ENCODE measurements at regions of chr10 and their contacts with region 1.

Region 1: DNA sequence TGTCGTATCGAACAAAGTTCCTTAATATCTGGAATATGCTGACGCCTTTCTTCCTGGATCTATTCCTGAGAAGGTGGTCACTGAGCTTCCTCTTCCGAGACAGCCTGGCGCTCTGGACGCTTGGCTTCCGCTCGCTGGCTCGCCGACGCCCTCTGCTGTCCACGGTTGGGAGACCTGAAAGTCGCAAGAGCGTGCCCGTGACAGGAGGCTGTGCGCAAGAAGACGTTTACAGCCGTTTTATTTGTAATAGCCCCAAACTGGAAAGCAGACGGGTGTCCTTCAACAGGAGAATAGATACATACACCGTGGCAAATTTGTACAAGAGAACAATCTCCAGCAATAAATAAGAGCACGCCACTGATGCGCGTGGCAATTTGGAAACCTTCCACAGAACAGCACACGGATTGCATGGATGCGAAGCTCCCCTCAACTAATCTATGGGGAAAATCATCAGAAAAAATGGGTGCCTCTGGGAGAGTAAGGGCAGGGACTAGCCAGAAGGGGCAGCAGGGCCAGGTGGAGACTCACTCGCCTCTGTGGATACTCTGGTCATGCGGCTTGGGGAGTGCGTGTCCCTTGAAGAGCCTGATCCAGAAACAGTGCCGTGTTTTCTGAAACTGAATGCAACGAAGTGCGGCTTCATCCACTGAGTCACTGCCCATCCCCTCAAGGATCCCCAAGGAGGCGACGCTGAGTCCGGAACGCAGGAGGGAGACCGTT is 41.5 kb upstream of the BNIP3 start:
- DNase-seq: peak; percentile 85
- H3K4me3 Mint-ChIP-seq: no peak overlapping the region
- H3K27ac Mint-ChIP-seq: no peak overlapping the region
- H3K4me1 Mint-ChIP-seq: peaks cover 5% of the 10 kb centered on the region
- H3K27me3 Mint-ChIP-seq: peaks cover 20% of the 10 kb centered on the region

Region 2: DNA sequence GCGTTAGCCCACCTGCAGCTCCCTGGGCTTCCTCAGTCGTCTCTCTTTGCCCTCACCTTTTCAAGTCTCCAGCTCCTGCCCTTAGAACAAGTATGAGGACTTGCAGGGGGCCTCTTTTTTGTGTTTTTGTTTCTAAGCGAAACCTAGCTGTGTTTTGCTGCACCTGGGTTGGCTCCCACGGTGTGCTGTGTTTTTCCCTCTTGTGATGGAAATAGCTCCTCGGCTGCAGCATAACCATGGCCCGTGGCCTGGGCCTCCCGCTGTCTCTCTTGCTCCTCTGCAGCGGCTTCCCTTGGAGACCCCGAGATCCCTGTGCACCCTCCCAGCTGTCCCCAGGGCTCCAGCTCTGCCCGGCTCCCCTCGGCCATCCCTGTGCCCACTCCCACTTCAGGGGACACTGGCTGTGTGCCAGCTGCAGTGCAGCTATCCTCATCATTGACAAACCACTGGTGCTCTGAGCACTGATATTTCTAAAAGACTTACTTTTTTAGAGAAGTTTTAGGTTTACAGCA is 636.2 kb before region 1 on chr10:
- CTCF ChIA-PET with region 1: no interaction called
- POLR2A ChIA-PET with region 1: no interaction called
- intact Hi-C with region 1: no loop called
- DNase-seq: no peak
- H3K4me3 Mint-ChIP-seq: no peak overlapping the region
- H3K27ac Mint-ChIP-seq: no peak overlapping the region
- H3K4me1 Mint-ChIP-seq: no peaks in the 10 kb centered on the region
- H3K27me3 Mint-ChIP-seq: no peaks in the 10 kb centered on the region

Region 3: DNA sequence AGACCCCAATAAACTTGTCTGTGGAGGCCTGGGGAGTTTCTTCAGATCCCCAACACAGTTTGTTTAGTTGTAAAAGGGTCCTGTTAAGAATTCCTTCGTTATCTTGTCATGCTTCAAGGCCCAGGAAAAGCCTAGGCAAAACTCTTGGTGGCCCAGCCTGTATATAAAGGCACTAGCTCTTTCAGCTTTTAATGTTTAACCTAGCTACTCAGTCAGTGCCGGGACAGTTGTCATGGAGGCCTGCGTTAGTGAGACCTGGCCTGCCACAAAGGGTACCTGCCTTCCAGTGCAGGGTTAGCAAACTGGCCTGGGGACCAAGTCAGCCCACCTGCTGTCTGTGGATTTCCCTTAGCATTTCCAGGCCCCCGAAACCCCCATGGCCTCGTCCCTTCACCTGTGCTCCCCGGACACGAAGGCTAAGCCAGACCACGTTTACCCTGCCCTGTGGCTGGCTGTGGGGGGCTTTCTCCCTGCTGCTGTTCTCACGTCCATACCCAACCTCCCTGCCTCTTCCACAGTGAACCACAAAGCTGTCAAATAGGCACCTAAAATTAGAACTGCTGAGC is 219.3 kb before region 1 on chr10:
- CTCF ChIA-PET with region 1: no interaction called
- POLR2A ChIA-PET with region 1: no interaction called
- intact Hi-C with region 1: no loop called
- DNase-seq: no peak
- H3K4me3 Mint-ChIP-seq: no peak overlapping the region
- H3K27ac Mint-ChIP-seq: no peak overlapping the region
- H3K4me1 Mint-ChIP-seq: no peaks in the 10 kb centered on the region
- H3K27me3 Mint-ChIP-seq: peaks cover 3% of the 10 kb centered on the region

Region 4: DNA sequence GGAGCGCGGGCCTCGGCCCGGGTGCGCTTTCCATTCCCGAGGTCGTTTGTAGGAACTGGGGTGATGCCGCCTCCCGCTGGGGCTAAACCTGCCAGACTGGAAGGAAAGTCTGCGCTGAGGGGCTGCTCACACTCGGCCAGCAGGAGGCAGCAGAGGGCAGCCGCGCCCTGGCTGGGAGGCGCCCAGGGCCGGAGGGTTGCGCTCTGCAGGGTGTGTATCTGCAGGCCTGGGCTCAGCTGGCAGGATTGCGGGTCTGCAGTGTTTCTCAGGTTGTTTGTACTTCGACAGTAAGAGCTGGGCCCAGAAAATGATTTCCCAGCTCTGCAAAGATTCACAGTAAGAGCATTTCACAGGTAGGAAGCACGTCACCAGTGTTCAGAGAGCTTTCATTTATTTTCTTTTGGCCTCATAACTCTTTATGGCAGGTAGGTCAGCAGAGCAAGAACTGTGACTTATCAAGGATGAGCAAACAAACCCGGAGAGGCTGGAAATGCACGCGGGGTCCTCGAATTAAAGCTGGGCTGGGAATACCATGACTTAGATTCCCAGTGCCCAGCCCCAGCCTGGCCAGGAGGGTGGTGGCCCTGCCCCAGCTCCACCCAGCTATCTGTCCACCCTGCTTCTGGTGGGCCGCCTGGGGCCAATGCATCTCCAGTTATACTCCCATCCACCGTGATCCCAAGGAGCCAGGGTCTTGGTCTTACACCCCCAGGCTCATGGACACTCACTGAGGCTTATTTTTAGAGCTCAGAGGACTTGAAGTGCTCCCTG is 137.7 kb before region 1 on chr10:
- CTCF ChIA-PET with region 1: interaction called, 124 read pairs
- POLR2A ChIA-PET with region 1: interaction called, 4 read pairs
- intact Hi-C with region 1: loop called (anchors 1 kb)
- DNase-seq: peak; percentile 86
- H3K4me3 Mint-ChIP-seq: no peak overlapping the region
- H3K27ac Mint-ChIP-seq: peak overlapping the region; percentile 29
- H3K4me1 Mint-ChIP-seq: peaks cover 3% of the 10 kb centered on the region
- H3K27me3 Mint-ChIP-seq: peaks cover 2% of the 10 kb centered on the region

Region 5: GRCh38 chr10:131972474-131973071 is 50.7 kb before region 1 on chr10:
- CTCF ChIA-PET with region 1: interaction called, 24 read pairs
- POLR2A ChIA-PET with region 1: no interaction called
- intact Hi-C with region 1: no loop called
- DNase-seq: peak; percentile 58
- H3K4me3 Mint-ChIP-seq: peak overlapping the region; percentile 66
- H3K27ac Mint-ChIP-seq: peak overlapping the region; percentile 89
- H3K4me1 Mint-ChIP-seq: peaks cover 60% of the 10 kb centered on the region
- H3K27me3 Mint-ChIP-seq: no peaks in the 10 kb centered on the region

Region 6: GRCh38 chr10:132011024-132011423 is 12.2 kb before region 1 on chr10:
- CTCF ChIA-PET with region 1: interaction called, 18 read pairs
- POLR2A ChIA-PET with region 1: no interaction called
- intact Hi-C with region 1: no loop called
- DNase-seq: no peak
- H3K4me3 Mint-ChIP-seq: no peak overlapping the region
- H3K27ac Mint-ChIP-seq: no peak overlapping the region
- H3K4me1 Mint-ChIP-seq: no peaks in the 10 kb centered on the region
- H3K27me3 Mint-ChIP-seq: peaks cover 9% of the 10 kb centered on the region

Region 7: GRCh38 chr10:132041340-132041739 is 18.1 kb after region 1 on chr10:
- CTCF ChIA-PET with region 1: interaction called, 10 read pairs
- POLR2A ChIA-PET with region 1: no interaction called
- intact Hi-C with region 1: no loop called
- DNase-seq: no peak
- H3K4me3 Mint-ChIP-seq: no peak overlapping the region
- H3K27ac Mint-ChIP-seq: no peak overlapping the region
- H3K4me1 Mint-ChIP-seq: peaks cover 6% of the 10 kb centered on the region
- H3K27me3 Mint-ChIP-seq: peaks cover 34% of the 10 kb centered on the region

Region 8: DNA sequence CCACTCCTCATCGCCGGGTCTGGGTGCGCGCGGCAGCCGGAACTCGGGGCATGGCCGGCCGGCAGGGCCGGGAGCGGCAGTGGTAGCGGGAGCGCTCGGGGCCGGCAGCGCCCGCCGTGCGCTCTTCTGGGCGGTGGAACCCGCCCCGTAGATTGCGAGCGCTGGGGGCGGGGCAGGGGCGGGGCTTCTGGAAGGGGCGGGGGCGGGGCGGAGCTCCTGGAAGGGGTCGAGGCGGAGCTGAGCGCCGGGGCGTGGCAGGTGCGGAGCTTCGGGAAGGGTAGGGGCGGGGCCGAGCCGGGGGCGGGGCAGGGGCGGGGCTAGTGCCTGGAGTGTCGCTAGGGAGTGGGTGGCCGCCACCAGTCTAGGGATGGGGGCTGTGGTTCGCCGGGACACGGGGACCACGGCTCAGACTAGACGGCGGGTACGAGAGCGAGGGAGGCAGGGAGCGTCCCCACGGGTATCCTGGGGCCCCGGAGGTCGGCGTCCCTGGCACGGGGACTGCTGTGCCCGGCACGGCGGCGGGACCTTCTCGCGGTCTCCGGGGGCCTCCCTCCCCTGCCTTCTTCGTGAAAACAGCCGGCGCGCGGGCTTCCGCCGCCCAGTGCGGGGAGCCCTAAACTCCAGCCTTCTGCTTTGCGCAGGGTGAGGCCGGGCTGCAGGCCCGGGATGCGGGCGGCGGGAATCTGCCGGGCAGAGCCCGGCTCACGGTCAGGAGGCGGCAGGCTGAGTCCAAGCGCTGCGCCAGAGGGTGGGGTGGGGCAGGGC is 284.8 kb after region 1 on chr10 and contains the start of gene STK32C:
- CTCF ChIA-PET with region 1: no interaction called
- POLR2A ChIA-PET with region 1: no interaction called
- intact Hi-C with region 1: no loop called
- DNase-seq: peak; percentile 93
- H3K4me3 Mint-ChIP-seq: peak within 1 kb of the TSS; percentile 85
- H3K27ac Mint-ChIP-seq: no peak within 1 kb of the TSS
- H3K4me1 Mint-ChIP-seq: peaks cover 11% of the 10 kb centered on the region
- H3K27me3 Mint-ChIP-seq: peaks cover 3% of the 10 kb centered on the region
- total RNA-seq, gene STK32C: 14.8 to 16.1 TPM